Heart left ventricle (tissue), 16 donors: ENCODE measurements at regions of chr17 and their contacts with region 1.

Region 1: DNA sequence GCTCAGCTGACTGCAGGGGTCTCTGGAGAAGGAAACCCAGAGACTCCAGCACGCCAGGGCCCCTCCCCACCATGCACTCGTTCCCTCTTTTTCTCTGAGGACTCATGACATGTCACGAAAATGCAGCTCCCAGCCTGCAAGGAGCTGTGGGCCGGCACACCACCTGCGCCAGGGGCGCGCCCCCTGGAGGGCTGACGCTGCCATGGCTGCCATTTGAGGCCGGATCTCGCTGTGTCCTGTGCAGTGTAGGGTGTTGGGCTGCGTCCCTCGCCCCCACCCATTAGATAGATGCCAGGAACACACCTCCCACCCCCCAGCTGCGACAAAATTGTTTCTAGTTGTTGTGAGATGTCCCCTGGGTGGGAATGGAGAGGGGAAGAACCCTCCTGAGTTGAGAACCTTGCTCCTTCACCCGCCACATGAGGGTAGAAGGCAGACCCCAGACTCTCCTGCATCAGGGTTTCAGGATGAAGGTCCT is 8.2 kb downstream of the SYNGR2 start:
- DNase-seq: peak; percentile 73 to 89 (median 76)
- ATAC-seq: peak; percentile 14 to 55 (median 36)
- H3K4me3 ChIP-seq: no peak overlapping the region
- H3K27ac ChIP-seq: peak overlapping the region in 2 of 12 donors; percentile 12 to 80
- H3K4me1 ChIP-seq: peaks cover 9 to 79% (median 52%) of the 10 kb centered on the region in 12 donors
- H3K27me3 ChIP-seq: no peaks in the 10 kb centered on the region
- CTCF ChIP-seq: peak; percentile 86 to 97 (median 94)
- POLR2A ChIP-seq: no peak

Region 2: DNA sequence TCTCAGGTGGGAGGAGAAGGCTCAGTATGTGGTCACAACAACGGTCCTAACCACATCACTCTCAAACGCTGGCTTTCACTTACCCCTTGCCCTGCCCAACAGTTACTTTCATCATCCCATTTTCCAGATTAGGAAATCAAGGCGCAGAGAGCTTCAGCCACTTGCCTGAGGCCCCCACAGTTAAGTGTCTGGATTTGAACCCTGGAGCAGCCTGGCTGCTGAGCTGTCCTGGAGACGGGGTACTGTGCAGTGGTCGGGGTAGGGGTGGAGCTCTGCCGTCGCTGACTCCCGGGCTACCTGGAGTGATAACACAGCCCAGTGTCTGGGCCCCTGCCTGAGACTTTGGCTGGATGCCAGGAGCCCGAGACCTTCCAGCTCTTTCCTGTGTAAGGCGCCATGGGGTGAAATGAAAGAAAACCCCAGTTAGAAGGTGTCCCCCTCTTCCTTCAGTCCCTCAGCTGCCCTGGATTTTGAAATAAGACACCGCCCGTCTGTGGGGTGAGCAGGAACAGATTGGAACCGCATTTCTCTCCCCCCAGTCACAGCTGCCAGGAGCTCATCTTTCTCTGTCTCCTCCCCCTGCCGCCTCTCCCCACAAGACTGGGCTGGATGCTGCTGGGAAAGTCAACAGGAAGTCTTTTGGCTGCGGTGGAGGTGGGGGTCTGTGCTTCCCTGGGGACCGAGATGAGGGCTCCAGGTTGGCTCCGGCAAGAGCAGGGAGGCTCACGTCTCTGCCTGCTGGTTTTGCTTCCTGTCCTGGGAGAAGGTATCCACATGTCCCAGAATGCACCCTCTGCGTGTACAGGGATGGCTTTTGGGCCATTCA is 755.6 kb before region 1 on chr17:
- intact Hi-C with region 1: no loop called
- DNase-seq: peak in 4 of 5 donors; percentile 66 to 73 (median 69)
- ATAC-seq: no peak
- H3K4me3 ChIP-seq: no peak overlapping the region
- H3K27ac ChIP-seq: peak overlapping the region in 11 of 12 donors; percentile 35 to 97 (median 58)
- H3K4me1 ChIP-seq: peaks cover 38 to 78% (median 68%) of the 10 kb centered on the region in 12 donors
- H3K27me3 ChIP-seq: no peaks in the 10 kb centered on the region
- CTCF ChIP-seq: no peak
- POLR2A ChIP-seq: no peak

Region 3: DNA sequence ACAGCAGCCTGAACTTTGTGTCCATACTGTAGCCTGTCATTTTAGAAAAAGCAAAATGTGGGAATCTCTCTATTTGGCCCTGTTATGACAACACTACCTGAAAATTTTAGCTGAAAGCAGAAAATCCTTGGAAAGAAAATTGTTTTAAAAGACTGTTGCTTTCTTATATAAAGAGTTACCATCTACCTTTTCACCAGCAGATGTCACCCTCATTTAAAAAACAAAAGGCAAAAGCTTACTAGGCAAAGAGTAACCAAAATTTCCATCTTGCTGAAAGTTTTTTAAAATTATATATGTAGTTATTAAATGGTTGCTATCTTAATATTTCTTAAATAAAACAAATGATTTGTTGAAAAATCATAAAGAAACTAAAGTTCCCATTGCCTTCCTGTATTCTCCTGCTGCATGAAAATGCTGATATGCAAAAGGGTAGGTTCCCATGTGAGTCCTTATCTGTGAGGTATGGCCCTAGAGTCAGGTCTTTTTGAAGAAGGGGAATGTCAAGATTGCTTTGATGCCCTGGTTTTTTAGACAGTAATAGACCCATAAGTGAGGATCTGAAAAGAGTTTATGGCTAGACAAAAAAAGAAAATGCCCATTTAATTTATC is 157.1 kb before region 1 on chr17:
- intact Hi-C with region 1: loop called in 1 of 10 experiments (anchors 2 kb)
- DNase-seq: no peak
- ATAC-seq: no peak
- H3K4me3 ChIP-seq: no peak overlapping the region
- H3K27ac ChIP-seq: peak overlapping the region in 1 of 12 donors; percentile 1
- H3K4me1 ChIP-seq: peaks cover 0 to 21% (median 4%) of the 10 kb centered on the region in 12 donors
- H3K27me3 ChIP-seq: no peaks in the 10 kb centered on the region
- CTCF ChIP-seq: peak; percentile 52 to 74 (median 60)
- POLR2A ChIP-seq: no peak

Region 4: DNA sequence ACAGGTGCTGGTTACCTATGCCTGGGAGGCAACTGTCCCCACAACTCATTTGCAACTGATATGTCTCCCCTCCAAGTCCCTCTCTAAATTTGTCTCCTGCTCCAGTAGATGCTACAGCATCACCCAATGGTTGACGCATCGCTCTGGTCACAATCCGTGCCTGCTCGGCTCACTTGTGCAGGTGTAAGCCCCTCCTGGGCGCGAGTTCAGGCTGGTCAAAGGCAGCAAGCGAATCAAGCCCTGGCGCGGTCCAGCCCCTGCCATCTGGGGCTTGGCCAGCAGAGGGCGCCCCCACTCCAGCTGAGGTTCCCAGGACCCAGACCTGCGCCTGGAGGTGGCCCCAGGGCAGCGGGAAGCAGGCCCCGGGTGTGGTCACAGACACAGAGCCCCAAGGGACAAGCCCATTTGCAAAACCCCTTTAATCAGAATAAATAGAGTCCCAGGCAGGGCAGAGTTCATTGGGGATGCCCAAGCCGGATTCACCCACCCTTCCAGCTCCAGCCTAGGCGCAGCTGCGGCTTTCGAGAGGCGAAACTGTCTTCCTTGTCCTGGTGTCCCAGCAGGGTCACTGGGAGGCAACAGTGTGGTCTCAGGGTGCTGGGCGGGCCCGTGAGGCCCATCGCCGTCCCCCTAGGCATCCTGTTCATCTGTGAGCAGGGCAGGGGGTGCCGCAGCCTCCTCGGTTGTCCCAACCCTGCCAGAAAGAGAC is 63.9 kb before region 1 on chr17:
- intact Hi-C with region 1: loop called (anchors 1 to 2 kb)
- DNase-seq: peak; percentile 73 to 92 (median 81)
- ATAC-seq: peak; percentile 27 to 66 (median 62)
- H3K4me3 ChIP-seq: no peak overlapping the region
- H3K27ac ChIP-seq: peak overlapping the region in 7 of 12 donors; percentile 1 to 54 (median 31)
- H3K4me1 ChIP-seq: peaks cover 0 to 63% (median 28%) of the 10 kb centered on the region in 12 donors
- H3K27me3 ChIP-seq: no peaks in the 10 kb centered on the region
- CTCF ChIP-seq: peak; percentile 99 to 100 (median 99)
- POLR2A ChIP-seq: no peak

Region 5: DNA sequence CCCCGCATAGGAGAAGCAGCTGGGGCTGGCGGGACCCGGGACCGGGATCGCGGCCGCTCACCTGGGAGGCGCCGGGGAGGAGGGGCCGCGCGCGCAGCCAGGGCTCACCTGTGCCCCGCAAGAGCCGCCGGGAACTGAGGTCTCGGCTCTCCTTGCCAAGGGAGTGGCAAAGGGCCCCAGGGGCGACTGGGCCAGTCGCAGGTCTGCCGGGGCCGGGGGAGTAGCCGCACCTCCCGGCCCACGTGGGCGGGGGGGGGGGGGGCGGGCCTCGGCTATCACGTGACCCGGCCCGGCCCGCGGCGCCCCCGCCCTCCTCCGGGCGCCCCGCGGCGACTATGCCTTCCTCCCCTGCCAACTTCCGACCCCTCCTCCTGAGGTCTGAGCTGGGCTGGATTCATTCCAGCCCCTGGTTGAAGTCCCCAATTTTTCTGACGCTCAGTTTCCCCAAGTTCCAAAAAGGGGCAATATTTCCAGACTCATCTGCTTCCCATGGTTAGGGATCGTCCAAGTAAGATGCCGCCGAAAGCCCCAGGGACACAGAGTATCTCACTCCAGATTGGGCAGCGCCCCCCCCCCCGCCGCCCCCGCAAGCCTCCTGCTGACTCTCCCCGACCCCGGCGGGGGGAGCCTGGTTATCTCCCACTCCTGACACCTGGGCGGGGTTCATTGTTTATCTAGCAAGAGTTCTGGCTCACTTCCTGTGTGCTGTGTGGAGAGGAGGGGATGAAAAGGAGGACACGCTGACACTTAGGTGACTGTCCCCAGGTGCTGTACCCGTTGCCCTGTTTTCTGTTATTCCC is 47.8 kb before region 1 on chr17 and contains the start of gene TMC6:
- intact Hi-C with region 1: loop called in 8 of 10 experiments (anchors 5 kb)
- DNase-seq: peak; percentile 62 to 78 (median 72)
- ATAC-seq: peak in 3 of 4 donors; percentile 13 to 38 (median 18)
- H3K4me3 ChIP-seq: peak within 1 kb of the TSS; percentile 71 to 98 (median 88)
- H3K27ac ChIP-seq: peak within 1 kb of the TSS; percentile 76 to 98 (median 94)
- H3K4me1 ChIP-seq: peaks cover 14 to 91% (median 63%) of the 10 kb centered on the region in 12 donors
- H3K27me3 ChIP-seq: peaks cover 0 to 4% (median 0%) of the 10 kb centered on the region in 9 donors
- CTCF ChIP-seq: no peak
- POLR2A ChIP-seq: peak in 1 of 2 donors; percentile 53
- total RNA-seq, gene TMC6: 41.5 to 139 (median 71.4) TPM

Region 6: GRCh38 chr17:78250891-78251794 is 74.6 kb after region 1 on chr17:
- intact Hi-C with region 1: loop called in 1 of 10 experiments (anchors 5 kb)
- DNase-seq: peak; percentile 83 to 93 (median 86)
- ATAC-seq: peak; percentile 60 to 80 (median 76)
- H3K4me3 ChIP-seq: peak overlapping the region in 2 of 12 donors; percentile 18 to 38
- H3K27ac ChIP-seq: peak overlapping the region in 1 of 12 donors; percentile 64
- H3K4me1 ChIP-seq: peaks cover 0 to 45% (median 13%) of the 10 kb centered on the region in 12 donors
- H3K27me3 ChIP-seq: no peaks in the 10 kb centered on the region
- CTCF ChIP-seq: peak; percentile 97 to 100 (median 100)
- POLR2A ChIP-seq: peak in 1 of 2 donors; percentile 19